ENCODE measurements at regions of chr15 and their contacts with region 1.

Region 1: GRCh38 chr15:77959432-77959879 is 118.1 kb downstream of the TBC1D2B start:
- DNase-seq: peak; percentile 85
- CTCF ChIP-seq: peak; percentile 96

Region 2: GRCh38 chr15:77419836-77420609 is 539.4 kb before region 1 on chr15 and contains the start of gene PEAK1:
- CTCF ChIA-PET with region 1: no interaction called
- POLR2A ChIA-PET with region 1: no interaction called
- DNase-seq: peak; percentile 97
- CTCF ChIP-seq: no peak

Region 3: GRCh38 chr15:77897896-77898406 is 61.5 kb before region 1 on chr15:
- CTCF ChIA-PET with region 1: no interaction called
- POLR2A ChIA-PET with region 1: no interaction called
- DNase-seq: no peak
- CTCF ChIP-seq: no peak

Region 4: DNA sequence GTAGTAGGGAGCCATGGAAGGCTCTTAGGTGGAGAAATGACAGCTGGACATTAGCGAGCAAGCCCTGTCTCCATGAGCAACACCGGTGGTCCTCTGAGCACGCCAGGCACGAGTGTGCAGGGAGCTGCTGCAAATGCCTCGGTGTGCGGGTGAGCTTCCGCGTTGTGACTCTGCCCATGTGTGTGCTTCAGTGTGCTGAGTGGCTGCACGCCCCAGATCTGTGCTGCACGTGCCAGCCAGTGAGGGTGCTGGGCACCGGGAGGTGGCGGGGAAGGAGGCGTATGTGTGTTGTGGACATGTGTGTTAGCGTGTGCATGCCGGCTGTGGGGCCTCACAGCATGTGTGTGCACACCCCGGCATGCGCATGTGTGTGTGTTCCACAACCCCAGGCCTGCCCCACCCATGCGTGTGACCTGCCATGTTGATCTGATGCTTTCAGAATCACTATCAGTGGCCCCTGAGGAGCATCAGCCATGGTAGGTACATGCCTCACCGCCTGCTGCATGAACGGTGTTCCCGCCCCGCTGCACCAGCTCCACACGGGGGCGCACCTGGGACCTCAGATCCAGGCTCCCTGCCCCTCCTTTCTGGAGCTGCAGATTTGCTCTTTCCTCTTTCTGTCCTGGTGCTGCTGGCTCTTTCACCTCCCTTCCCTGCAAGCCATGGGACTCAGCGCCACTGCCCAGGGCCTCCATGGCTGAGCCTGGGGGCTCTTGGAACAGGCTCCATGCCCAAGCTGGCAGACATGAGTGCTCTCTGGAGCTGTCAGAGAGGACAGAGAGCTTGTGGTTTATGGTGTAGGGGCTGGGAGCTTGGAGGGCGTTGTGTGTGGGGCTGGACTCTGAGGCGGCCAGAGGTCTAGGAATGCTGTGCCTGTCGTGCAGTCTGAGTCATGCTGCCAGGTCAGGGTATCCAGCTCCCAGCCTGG is 51.4 kb before region 1 on chr15:
- CTCF ChIA-PET with region 1: interaction called, 14 read pairs
- POLR2A ChIA-PET with region 1: no interaction called
- DNase-seq: peak; percentile 56
- CTCF ChIP-seq: peak; percentile 92

Region 5: GRCh38 chr15:77944002-77944867 is 15.2 kb before region 1 on chr15:
- CTCF ChIA-PET with region 1: interaction called, 15 read pairs
- POLR2A ChIA-PET with region 1: no interaction called
- DNase-seq: peak; percentile 55
- CTCF ChIP-seq: no peak

Region 6: DNA sequence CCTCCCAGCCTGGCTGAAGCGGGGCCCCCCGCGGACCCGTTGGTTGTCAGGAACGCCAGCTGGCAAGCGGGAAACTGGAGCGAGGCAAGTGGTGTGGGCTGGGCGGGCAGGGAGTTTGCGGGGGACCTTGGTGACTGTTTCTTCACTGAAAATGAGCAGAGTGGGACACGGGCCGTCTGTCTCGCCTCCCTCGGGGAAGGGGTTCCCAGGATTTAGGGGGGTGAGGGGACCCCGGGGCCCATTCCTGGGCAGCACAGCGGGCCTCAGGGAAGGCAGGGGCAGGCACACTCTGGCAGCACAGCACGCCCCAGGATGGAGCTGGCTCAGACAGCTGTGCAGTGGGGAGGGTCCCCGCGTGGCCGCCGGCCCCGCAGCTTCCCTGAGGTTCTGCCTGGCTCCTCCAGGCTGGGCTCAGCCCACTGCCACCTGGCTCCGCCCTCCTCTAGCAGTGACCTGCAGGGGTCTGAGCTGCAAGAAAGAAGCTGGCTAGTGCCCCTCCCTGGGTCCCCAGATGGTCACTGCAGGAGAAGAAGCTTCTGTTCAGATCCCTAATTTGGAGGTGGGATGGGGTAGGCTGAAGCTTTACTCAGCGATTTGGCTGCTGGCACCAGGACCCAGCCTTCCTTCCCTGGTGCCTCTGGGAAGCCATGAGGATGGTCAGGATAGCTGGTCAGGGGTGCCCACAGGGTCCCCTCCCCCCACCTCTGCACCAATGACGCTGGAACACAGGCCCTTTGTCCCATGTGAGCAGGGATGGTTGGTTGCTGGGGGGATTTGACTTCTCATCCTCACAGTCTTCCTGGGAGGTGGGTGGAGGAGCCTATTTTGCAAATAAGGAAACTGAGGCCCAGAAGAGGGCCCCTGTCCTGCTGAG is 27.7 kb after region 1 on chr15:
- CTCF ChIA-PET with region 1: no interaction called
- POLR2A ChIA-PET with region 1: no interaction called
- DNase-seq: no peak
- CTCF ChIP-seq: no peak

Region 7: GRCh38 chr15:78000091-78000926 is 40.9 kb after region 1 on chr15:
- CTCF ChIA-PET with region 1: interaction called, 11 read pairs
- POLR2A ChIA-PET with region 1: no interaction called
- DNase-seq: peak; percentile 77
- CTCF ChIP-seq: peak; percentile 67

Measured in GM10248 (cell line).